Transverse colon (tissue), 4 donors: ENCODE measurements at regions of chr3 and their contacts with region 1.

Region 1: DNA sequence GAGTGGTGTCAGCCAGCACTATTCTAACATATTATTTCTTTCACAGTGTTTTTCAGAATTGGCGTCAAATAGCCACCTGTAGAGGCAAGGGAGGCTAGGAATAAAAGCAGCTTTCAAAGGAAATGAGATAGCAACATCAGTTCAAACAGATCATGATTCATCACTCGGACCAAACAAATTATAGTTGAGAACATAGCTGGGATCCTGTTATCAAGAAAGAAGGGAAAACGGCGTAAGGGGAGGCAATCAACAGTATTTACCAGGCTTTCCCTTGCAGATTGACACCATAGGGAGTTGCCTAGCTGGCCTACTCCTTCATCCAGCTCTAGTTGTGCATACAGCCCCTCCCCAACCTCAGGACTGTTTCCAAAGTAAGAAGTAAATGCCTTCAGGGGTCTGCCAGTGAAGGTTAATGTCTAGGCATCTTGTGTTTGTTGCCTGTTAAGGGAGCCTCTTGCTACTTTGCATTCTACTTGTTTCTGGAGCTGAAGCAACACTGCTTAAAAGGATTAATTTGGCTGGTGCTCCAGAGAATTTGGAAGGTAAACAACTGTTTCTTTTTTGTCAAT is 286.5 kb downstream of the NSUN3 start:
- DNase-seq: no peak
- H3K4me3 ChIP-seq: no peak overlapping the region
- H3K27ac ChIP-seq: no peak overlapping the region
- H3K4me1 ChIP-seq: no peaks in the 10 kb centered on the region
- H3K27me3 ChIP-seq: no peaks in the 10 kb centered on the region
- CTCF ChIP-seq: no peak
- EP300 ChIP-seq: no peak
- POLR2A ChIP-seq: no peak

Region 2: DNA sequence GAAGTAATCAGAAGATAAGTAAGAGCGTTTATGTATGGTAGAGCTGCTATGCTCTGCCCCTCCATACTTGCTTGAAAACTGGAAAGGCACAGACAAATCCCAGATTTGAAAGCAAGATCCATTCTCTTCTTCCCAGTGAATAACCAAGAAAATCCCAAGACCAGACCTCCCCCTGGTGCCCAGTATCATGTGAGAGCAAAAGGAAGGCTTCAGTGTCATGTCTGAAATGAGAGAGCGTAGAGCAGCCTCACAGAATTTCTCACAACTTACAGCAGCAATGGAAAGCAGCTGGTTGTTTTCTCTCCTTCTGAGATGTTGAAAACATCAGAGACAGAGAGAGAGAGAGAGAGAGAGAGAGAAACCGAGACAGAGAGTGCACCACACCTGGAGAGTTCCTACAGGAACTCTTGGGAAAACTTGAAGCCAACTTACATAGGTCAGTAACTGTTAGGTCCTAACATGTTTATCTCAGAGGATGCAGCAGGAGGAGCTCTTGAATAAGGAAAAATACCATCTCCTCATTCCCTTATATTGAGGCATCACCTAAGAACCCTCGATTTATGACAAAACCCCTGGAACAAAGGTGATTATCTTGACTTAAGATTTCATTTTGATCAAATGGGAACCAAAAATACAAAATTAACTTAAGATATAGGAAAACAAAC is 13.2 kb before region 1 on chr3:
- in situ Hi-C with region 1: no loop called
- intact Hi-C with region 1: loop called (anchors 1 kb)
- DNase-seq: peak; percentile 7
- H3K4me3 ChIP-seq: no peak overlapping the region
- H3K27ac ChIP-seq: no peak overlapping the region
- H3K4me1 ChIP-seq: no peaks in the 10 kb centered on the region
- H3K27me3 ChIP-seq: no peaks in the 10 kb centered on the region
- CTCF ChIP-seq: peak; percentile 32 to 66 (median 45)
- EP300 ChIP-seq: no peak
- POLR2A ChIP-seq: no peak

Region 3: GRCh38 chr3:94654096-94654495 is 304.7 kb after region 1 on chr3:
- in situ Hi-C with region 1: no loop called
- intact Hi-C with region 1: no loop called
- DNase-seq: no peak
- H3K4me3 ChIP-seq: no peak overlapping the region
- H3K27ac ChIP-seq: no peak overlapping the region
- H3K4me1 ChIP-seq: peaks cover 0 to 14% (median 0%) of the 10 kb centered on the region in 4 donors
- H3K27me3 ChIP-seq: no peaks in the 10 kb centered on the region
- CTCF ChIP-seq: no peak
- EP300 ChIP-seq: no peak
- POLR2A ChIP-seq: no peak